Activated CD8-positive, alpha-beta T cell treated with anti-CD3 and anti-CD28 coated beads for 36 hours (primary cell): ENCODE measurements at regions of chr12 and their contacts with region 1.

Region 1: DNA sequence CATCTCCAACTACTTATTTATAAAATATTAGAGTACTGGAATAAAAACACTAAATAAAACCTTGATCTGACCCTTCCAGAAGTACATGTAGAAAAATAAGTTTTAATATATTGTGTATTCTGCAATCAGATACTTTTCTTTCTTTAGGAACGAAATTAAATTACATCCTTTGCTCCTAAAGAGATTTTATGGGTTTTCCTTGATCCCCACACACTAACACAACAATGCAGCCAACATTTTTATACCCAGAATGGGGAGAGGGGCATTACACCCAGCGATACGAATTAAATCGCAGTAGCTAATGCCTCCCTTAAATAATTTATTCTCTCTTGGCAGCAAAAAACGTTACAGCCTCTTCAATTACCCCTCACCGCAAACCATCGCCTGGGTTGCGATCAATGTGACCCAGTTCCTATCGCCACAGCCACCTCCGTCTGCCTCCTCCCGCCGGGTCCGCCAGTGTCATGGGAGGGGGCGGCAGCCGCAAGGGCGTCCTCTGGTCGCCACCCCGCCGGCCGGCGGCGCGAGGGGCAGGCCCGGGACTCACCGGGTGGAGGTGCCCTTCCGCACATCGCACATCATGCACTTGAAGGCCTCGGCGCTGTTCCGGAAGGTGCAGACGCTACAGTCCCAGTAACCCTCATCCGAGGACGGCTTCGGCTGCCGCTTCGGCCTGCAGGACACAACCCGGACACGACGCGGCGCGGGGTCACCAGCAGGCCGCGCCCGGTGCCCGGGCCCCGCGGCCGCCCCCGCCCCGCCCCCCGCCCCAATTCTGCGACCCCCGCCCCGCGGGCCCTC is 796 bp downstream of the YAF2 start:
- DNase-seq: peak; percentile 84
- ATAC-seq: peak; percentile 86
- H3K4me3 Mint-ChIP-seq: peak overlapping the region; percentile 92
- H3K27ac Mint-ChIP-seq: peak overlapping the region; percentile 91
- H3K4me1 Mint-ChIP-seq: peaks cover 38% of the 10 kb centered on the region
- H3K27me3 Mint-ChIP-seq: no peaks in the 10 kb centered on the region
- CTCF ChIP-seq: peak; percentile 42

Region 2: DNA sequence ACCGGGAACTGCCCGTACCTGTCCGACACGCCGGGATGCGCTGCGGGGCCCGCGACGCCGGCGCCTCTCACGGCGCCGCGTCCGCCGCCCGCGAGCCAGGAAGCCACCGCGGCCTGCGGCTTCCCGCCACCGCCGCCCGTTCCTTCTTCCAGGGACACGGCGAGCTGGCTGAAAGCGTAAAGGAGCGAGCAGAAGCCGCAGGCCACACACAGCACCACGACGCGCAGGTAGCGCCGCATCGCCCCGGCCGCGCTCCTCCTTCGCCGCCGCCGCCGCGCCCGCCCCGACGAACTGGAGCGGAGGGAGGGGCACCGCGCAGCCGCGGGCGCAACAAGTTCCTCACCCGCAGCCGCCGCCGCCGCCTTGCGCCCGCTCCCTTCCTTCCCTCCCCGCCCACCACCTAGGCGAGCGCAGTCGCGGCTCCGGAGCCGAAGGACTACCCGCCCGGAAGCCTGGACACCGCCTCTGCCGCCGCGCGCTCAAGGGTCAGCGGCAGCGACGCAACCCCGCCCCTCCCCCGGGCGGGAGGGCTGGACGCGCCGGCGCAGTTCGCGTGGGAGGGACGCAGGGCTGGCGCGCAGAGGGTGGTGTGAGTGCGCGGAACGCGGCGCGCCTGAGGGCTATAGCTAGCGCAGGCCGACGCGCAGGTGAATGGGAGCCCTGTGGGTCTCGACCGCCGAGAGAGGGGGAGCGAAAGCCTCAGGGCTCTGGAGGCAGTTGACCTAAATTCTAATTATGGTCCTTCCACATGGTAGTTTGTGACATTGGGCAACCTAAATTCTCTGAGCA is 92.7 kb before region 1 on chr12 and contains the start of gene GXYLT1:
- CTCF ChIA-PET with region 1: interaction called, 4 read pairs
- POLR2A ChIA-PET with region 1: interaction called, 5 read pairs
- intact Hi-C with region 1: loop called (anchors 5 kb)
- DNase-seq: peak; percentile 81
- ATAC-seq: peak; percentile 91
- H3K4me3 Mint-ChIP-seq: peak within 1 kb of the TSS; percentile 80
- H3K27ac Mint-ChIP-seq: peak within 1 kb of the TSS; percentile 56
- H3K4me1 Mint-ChIP-seq: peaks cover 31% of the 10 kb centered on the region
- H3K27me3 Mint-ChIP-seq: no peaks in the 10 kb centered on the region
- CTCF ChIP-seq: no peak
- total RNA-seq, gene GXYLT1: 5.3 to 6.3 TPM

Region 3: GRCh38 chr12:42213023-42213422 is 24.2 kb before region 1 on chr12:
- CTCF ChIA-PET with region 1: no interaction called
- POLR2A ChIA-PET with region 1: no interaction called
- intact Hi-C with region 1: no loop called
- DNase-seq: no peak
- ATAC-seq: no peak
- H3K4me3 Mint-ChIP-seq: no peak overlapping the region
- H3K27ac Mint-ChIP-seq: no peak overlapping the region
- H3K4me1 Mint-ChIP-seq: peaks cover 18% of the 10 kb centered on the region
- H3K27me3 Mint-ChIP-seq: no peaks in the 10 kb centered on the region
- CTCF ChIP-seq: no peak

Region 4: GRCh38 chr12:42325653-42326474 is 88.6 kb after region 1 on chr12 and contains the starts of genes PPHLN1 and ZCRB1:
- CTCF ChIA-PET with region 1: no interaction called
- POLR2A ChIA-PET with region 1: interaction called, 4 read pairs
- intact Hi-C with region 1: loop called (anchors 5 kb)
- DNase-seq: peak; percentile 90
- ATAC-seq: peak; percentile 95
- H3K4me3 Mint-ChIP-seq: peak within 1 kb of the TSS; percentile 87
- H3K27ac Mint-ChIP-seq: peak within 1 kb of the TSS; percentile 95
- H3K4me1 Mint-ChIP-seq: peaks cover 36% of the 10 kb centered on the region
- H3K27me3 Mint-ChIP-seq: no peaks in the 10 kb centered on the region
- CTCF ChIP-seq: no peak
- total RNA-seq, gene PPHLN1: 73.2 to 76.1 TPM
- total RNA-seq, gene ZCRB1: 77.0 to 81.3 TPM